ENCODE measurements at regions of chr9 and their contacts with region 1.

Region 1: GRCh38 chr9:136991993-136992818 is at the start of gene PAXX:
- DNase-seq: peak; percentile 92 to 93 (median 93)
- H3K4me3 ChIP-seq: peak within 1 kb of the TSS; percentile 86 to 90
- H3K4me3 Mint-ChIP-seq: peak within 1 kb of the TSS; percentile 84 to 92 (median 88)
- H3K27ac ChIP-seq: peak within 1 kb of the TSS; percentile 85
- H3K27ac Mint-ChIP-seq: peak within 1 kb of the TSS; percentile 83 to 94 (median 88)
- H3K4me1 ChIP-seq: peaks cover 41% of the 10 kb centered on the region
- H3K4me1 Mint-ChIP-seq: peaks cover 4 to 41% (median 20%) of the 10 kb centered on the region in 4 donors
- H3K27me3 ChIP-seq: no peaks in the 10 kb centered on the region
- H3K27me3 Mint-ChIP-seq: peaks cover 0 to 5% of the 10 kb centered on the region in 2 donors
- total RNA-seq, gene PAXX: 94.2 to 101 TPM

Region 2: GRCh38 chr9:136742591-136743391 is 249.4 kb before region 1 on chr9 and contains the start of gene LCN10:
- CTCF ChIA-PET with region 1: no interaction called
- POLR2A ChIA-PET with region 1: no interaction called
- intact Hi-C with region 1: no loop called
- DNase-seq: peak in 1 of 5 donors; percentile 35
- H3K4me3 ChIP-seq: peak within 1 kb of the TSS in 1 of 2 donors; percentile 28
- H3K4me3 Mint-ChIP-seq: peak within 1 kb of the TSS in 6 of 8 donors; percentile 25 to 76 (median 68)
- H3K27ac ChIP-seq: no peak within 1 kb of the TSS
- H3K27ac Mint-ChIP-seq: no peak within 1 kb of the TSS
- H3K4me1 ChIP-seq: peaks cover 13% of the 10 kb centered on the region
- H3K4me1 Mint-ChIP-seq: peaks cover 0 to 7% (median 3%) of the 10 kb centered on the region in 4 donors
- H3K27me3 ChIP-seq: no peaks in the 10 kb centered on the region
- H3K27me3 Mint-ChIP-seq: peaks cover 0 to 3% of the 10 kb centered on the region in 2 donors
- total RNA-seq, gene LCN10: 0.90 to 1.3 TPM

Region 3: DNA sequence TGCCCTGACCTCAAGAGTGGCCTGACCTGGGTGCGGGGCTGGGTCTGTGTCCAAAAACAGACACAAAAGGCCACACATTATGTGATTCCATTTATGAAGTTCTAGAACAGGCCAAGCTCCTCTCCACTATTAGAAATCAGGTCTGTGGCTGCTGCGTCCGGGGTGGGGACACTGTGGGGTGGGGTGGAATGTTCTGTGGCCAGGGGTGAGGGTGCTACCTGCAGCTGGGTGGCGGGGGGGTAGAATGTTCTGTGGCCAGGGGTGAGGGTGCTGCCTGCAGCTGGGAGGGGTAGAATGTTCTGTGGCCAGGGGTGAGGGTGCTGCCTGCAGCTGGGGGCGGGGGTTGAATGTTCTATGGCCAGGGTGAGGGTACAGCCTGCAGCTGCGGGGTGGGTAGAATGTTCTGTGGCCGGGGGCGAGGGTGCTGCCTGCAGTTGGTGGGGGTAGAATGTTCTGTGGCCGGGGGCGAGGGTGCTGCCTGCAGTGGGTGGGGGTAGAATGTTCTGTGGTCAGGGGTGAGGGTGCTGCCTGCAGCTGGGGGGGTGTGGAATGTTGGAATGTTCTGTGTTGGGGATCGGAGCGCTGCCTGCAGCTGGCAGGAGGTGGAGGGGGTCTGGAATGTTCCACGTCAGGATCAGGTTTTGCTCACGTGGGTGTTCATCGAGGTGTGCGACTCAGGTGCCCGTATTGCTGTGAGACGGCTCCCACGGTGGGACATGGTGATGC is 31.8 kb before region 1 on chr9:
- CTCF ChIA-PET with region 1: no interaction called
- POLR2A ChIA-PET with region 1: interaction called, 19 read pairs
- intact Hi-C with region 1: no loop called
- DNase-seq: peak in 4 of 5 donors; percentile 36 to 45 (median 41)
- H3K4me3 ChIP-seq: no peak overlapping the region
- H3K4me3 Mint-ChIP-seq: peak overlapping the region; percentile 56 to 81 (median 78)
- H3K27ac ChIP-seq: peak overlapping the region; percentile 24
- H3K27ac Mint-ChIP-seq: peak overlapping the region; percentile 13 to 96 (median 94)
- H3K4me1 ChIP-seq: peaks cover 63% of the 10 kb centered on the region
- H3K4me1 Mint-ChIP-seq: peaks cover 19 to 61% (median 25%) of the 10 kb centered on the region in 4 donors
- H3K27me3 ChIP-seq: no peaks in the 10 kb centered on the region
- H3K27me3 Mint-ChIP-seq: no peaks in the 10 kb centered on the region

Region 4: GRCh38 chr9:136965771-136966484 is 26.3 kb before region 1 on chr9:
- CTCF ChIA-PET with region 1: no interaction called
- POLR2A ChIA-PET with region 1: interaction called, 19 read pairs
- intact Hi-C with region 1: no loop called
- DNase-seq: peak; percentile 41 to 71 (median 48)
- H3K4me3 ChIP-seq: no peak overlapping the region
- H3K4me3 Mint-ChIP-seq: peak overlapping the region; percentile 70 to 86 (median 79)
- H3K27ac ChIP-seq: peak overlapping the region; percentile 42
- H3K27ac Mint-ChIP-seq: peak overlapping the region; percentile 77 to 91 (median 88)
- H3K4me1 ChIP-seq: peaks cover 47% of the 10 kb centered on the region
- H3K4me1 Mint-ChIP-seq: peaks cover 19 to 38% (median 30%) of the 10 kb centered on the region in 4 donors
- H3K27me3 ChIP-seq: no peaks in the 10 kb centered on the region
- H3K27me3 Mint-ChIP-seq: no peaks in the 10 kb centered on the region

Measured in CD4-positive, alpha-beta memory T cell (primary cell).